ENCODE measurements at regions of chr4 and their contacts with region 1.

Region 1: DNA sequence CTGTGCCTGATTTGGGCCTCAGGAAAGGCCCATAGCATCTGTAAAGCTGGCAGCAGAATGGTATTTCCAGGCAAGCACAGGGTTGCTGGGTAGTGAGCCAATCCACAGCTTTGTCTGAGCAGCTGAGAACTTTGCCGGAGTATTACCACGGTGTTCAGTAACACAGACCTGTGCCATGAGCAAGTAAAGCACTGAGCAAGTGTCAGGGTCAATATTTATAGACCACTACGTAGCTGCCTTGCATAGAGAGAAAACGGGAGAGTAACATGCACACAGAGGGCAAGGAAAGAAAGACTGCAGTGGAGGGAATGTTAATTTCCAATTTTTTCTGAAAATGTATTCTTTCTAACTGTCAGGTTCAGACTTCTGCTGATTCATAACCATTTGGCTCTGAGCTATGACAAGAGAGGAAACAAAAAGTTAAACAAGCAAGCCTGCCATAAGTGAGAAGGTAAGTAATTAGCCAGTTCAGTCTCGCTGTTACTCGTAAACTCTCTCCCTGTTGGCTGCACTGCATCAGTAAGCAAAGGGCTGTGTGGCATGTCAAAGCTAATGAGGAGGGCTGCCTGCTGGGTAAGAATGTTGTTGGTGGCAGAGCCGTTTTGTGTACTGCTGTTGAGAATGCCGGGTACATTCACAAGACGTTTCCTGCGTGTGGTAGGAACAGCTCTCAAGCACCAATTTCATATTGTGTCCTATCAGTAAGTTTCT is 238.1 kb downstream of the BMPR1B start:
- DNase-seq: peak; percentile 67
- H3K4me3 ChIP-seq: no peak overlapping the region
- H3K27ac ChIP-seq: no peak overlapping the region
- H3K4me1 ChIP-seq: peaks cover 3% of the 10 kb centered on the region
- H3K27me3 ChIP-seq: no peaks in the 10 kb centered on the region
- CTCF ChIP-seq: no peak
- POLR2A ChIP-seq: no peak

Region 2: DNA sequence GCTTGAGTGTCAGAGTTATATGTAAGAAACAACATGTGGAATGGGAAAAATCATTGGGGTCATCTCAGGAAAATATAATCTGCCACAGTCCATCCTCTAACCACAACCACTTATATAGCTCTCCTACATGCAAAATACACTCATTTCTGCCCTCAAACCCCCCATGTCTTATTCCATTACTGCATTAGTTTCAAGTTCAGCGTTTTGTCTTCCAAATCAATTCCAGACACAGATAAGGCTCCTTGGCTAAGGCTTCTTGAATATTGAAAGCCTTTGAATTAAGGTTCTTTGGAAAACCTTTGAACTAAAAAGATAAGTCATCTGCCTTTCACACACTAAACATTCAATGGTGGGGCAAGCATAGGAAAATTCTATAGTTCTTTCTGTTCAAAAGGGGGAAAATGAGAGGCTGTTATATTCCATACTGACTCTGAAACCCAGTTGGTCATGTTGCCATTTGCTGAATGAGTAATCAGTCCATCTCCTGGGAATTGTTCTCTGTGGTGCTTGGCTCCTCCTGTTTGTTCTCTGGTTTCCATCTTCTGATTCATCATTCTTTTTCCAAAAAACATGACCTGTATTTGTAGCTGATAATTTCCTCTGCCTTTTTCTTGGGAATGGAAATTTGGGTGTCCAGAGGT is 19.3 kb before region 1 on chr4:
- CTCF ChIA-PET with region 1: interaction called, 3 read pairs
- POLR2A ChIA-PET with region 1: no interaction called
- dilution Hi-C with region 1: no loop called
- intact Hi-C with region 1: loop called (anchors 1 kb)
- DNase-seq: peak; percentile 30
- H3K4me3 ChIP-seq: no peak overlapping the region
- H3K27ac ChIP-seq: no peak overlapping the region
- H3K4me1 ChIP-seq: no peaks in the 10 kb centered on the region
- H3K27me3 ChIP-seq: no peaks in the 10 kb centered on the region
- CTCF ChIP-seq: no peak
- POLR2A ChIP-seq: no peak

Region 3: GRCh38 chr4:95358421-95358820 is 362.6 kb after region 1 on chr4:
- CTCF ChIA-PET with region 1: no interaction called
- POLR2A ChIA-PET with region 1: no interaction called
- dilution Hi-C with region 1: no loop called
- intact Hi-C with region 1: no loop called
- DNase-seq: no peak
- H3K4me3 ChIP-seq: no peak overlapping the region
- H3K27ac ChIP-seq: no peak overlapping the region
- H3K4me1 ChIP-seq: peaks cover 7% of the 10 kb centered on the region
- H3K27me3 ChIP-seq: no peaks in the 10 kb centered on the region
- CTCF ChIP-seq: no peak
- POLR2A ChIP-seq: no peak

Measured in endothelial cell of umbilical vein (primary cell).